Posterior vena cava (tissue), 2 donors: ENCODE measurements at regions of chr19 and their contacts with region 1.

Region 1: GRCh38 chr19:2427429-2428320 is at the start of gene TIMM13:
- DNase-seq: peak; percentile 99
- total RNA-seq, gene TIMM13: 32.8 to 37.2 TPM

Region 2: DNA sequence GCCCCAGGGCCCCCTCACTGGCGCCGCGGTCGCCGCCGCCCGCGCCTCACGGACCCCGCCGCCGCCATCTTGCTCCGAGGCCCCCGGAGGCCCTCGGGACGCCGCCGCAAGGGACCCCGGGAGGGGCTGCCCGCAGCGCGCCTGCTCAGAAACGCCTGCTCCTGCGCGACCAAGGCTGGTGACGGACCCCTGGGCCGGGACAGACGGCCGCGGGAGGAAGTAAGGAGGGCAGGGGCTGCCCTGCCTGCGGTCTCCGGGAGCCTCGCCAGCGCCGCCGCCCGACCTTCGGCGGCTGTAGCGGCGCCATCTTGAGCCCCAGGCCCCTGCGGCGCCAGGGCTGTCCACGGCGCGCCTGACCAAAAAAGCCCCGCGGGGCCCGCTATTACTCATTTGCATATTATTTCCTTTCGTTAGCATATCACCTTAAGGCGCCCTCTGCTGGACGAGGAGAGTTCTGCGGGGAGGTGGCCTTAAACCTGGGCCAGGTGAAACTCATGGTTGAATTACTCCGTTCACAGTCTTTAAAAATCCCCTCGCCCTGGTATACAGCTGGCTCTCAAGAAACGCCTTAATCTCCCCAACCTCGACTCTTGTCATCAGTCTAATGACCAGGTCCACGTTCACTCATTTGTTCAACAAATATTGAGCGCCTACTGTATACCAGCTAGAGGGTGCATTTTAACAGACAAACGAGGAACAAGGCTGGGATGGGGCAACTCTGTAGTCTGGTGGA is 579.1 kb before region 1 on chr19 and contains the start of gene REXO1:
- intact Hi-C with region 1: no loop called
- DNase-seq: peak; percentile 98
- total RNA-seq, gene REXO1: 22.8 to 27.4 TPM

Region 3: DNA sequence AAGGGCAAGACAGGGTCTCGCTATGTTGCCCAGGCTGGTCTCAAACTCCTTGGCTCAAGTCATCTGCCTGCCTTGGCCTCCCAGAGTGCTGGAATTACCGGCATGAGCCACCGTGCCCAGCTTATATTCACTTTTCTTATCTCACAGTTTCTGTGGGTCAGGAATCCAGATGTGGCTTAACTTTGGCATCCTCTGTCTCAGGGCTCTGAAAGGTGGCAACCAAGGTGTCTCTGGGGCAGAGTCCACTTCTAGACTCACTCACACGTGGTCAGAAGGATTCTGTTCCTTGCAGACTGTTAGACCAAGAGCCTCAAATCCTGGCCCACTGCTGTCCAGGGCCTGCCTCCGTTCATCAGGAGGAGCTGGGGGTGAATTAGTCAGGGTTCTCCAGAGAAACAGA is 36.7 kb after region 1 on chr19:
- intact Hi-C with region 1: loop called in 1 of 2 experiments (anchors 2 kb)
- DNase-seq: no peak